ENCODE measurements at regions of chr22 and their contacts with region 1.

Region 1: DNA sequence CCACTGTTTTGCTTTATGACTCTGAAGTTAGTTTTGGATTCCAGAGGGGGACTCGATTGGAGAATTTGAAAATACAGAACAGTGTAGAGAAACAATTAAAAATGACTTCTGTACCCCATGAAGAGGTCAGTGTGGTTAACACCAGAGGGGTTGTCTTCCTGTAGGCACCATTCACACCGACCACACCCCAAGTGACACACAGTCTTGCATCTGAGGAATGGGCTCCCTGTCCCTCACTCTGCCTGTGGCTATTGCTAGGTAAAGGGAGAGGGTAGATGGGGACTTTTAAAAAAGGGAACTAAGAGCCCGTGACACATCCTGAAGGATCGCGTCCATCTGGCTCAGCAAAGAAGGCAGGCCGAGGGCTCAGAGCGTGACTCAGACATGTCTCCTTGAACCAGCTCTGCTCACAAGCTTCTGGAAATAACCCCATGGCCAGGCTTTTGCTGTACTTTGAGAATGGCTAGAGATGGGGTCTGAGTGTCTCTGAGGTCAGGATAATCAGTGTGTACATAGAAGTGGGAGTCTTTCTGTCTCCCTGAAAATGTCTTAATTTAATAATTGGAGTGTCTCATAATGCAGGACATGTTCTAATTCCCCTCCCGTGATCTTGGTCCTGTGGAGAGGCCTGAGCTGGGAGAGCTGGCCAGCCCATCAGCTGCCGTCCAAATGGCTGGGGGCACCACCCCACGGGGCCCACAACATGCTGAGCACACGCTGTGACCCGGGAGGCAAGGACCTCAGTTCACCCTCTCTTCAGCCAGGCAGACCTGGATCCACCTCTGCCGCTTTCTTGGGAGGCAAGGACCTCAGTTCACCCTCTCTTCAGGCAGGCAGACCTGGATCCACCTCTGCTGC is 39.3 kb downstream of the SGSM1 start:
- DNase-seq: no peak
- H3K4me3 ChIP-seq: no peak overlapping the region
- H3K27ac ChIP-seq: no peak overlapping the region
- H3K4me1 ChIP-seq: no peaks in the 10 kb centered on the region
- H3K27me3 ChIP-seq: no peaks in the 10 kb centered on the region
- CTCF ChIP-seq: no peak
- EP300 ChIP-seq: no peak
- POLR2A ChIP-seq: no peak
- RAD21 ChIP-seq: no peak

Region 2: GRCh38 chr22:24768537-24769374 is 76.5 kb before region 1 on chr22:
- CTCF ChIA-PET with region 1: interaction called, 39 read pairs
- POLR2A ChIA-PET with region 1: no interaction called
- DNase-seq: peak in 1 of 2 experiments; percentile 76
- H3K4me3 ChIP-seq: no peak overlapping the region
- H3K27ac ChIP-seq: no peak overlapping the region
- H3K4me1 ChIP-seq: peaks cover 0 to 3% (median 1%) of the 10 kb centered on the region in 4 experiments; a peak in 2 of 7 replicates
- H3K27me3 ChIP-seq: no peaks in the 10 kb centered on the region
- CTCF ChIP-seq: peak; percentile 47 to 82 (median 65)
- EP300 ChIP-seq: no peak
- POLR2A ChIP-seq: no peak
- RAD21 ChIP-seq: peak; percentile 82 to 85

Region 3: GRCh38 chr22:24803011-24803542 is 42.2 kb before region 1 on chr22:
- CTCF ChIA-PET with region 1: interaction called, 18 read pairs
- POLR2A ChIA-PET with region 1: no interaction called
- DNase-seq: peak; percentile 73 to 97
- H3K4me3 ChIP-seq: no peak overlapping the region
- H3K27ac ChIP-seq: no peak overlapping the region
- H3K4me1 ChIP-seq: peaks cover 0 to 6% (median 3%) of the 10 kb centered on the region in 4 experiments; a peak in 6 of 7 replicates
- H3K27me3 ChIP-seq: no peaks in the 10 kb centered on the region
- CTCF ChIP-seq: peak; percentile 90 to 96 (median 95)
- EP300 ChIP-seq: no peak
- POLR2A ChIP-seq: no peak
- RAD21 ChIP-seq: peak; percentile 51 to 67

Region 4: GRCh38 chr22:24827296-24827695 is 18.0 kb before region 1 on chr22:
- CTCF ChIA-PET with region 1: interaction called, 21 read pairs
- POLR2A ChIA-PET with region 1: interaction called, 3 read pairs
- DNase-seq: no peak
- H3K4me3 ChIP-seq: no peak overlapping the region
- H3K27ac ChIP-seq: no peak overlapping the region
- H3K4me1 ChIP-seq: peaks cover 4 to 12% (median 11%) of the 10 kb centered on the region in 4 experiments
- H3K27me3 ChIP-seq: no peaks in the 10 kb centered on the region
- CTCF ChIP-seq: no peak
- EP300 ChIP-seq: no peak
- POLR2A ChIP-seq: no peak
- RAD21 ChIP-seq: no peak

Region 5: GRCh38 chr22:24834845-24835570 is 10.3 kb before region 1 on chr22:
- CTCF ChIA-PET with region 1: interaction called, 22 read pairs
- POLR2A ChIA-PET with region 1: interaction called, 3 read pairs
- DNase-seq: peak in 1 of 2 experiments; percentile 57
- H3K4me3 ChIP-seq: no peak overlapping the region
- H3K27ac ChIP-seq: no peak overlapping the region; the same call in 1 of the 2 replicates
- H3K4me1 ChIP-seq: peaks cover 9 to 20% (median 15%) of the 10 kb centered on the region in 4 experiments
- H3K27me3 ChIP-seq: no peaks in the 10 kb centered on the region
- CTCF ChIP-seq: peak; percentile 60 to 76 (median 63)
- EP300 ChIP-seq: no peak
- POLR2A ChIP-seq: no peak
- RAD21 ChIP-seq: peak; percentile 36 to 53

Region 6: GRCh38 chr22:24867323-24868022 is 22.2 kb after region 1 on chr22:
- CTCF ChIA-PET with region 1: interaction called, 14 read pairs
- POLR2A ChIA-PET with region 1: no interaction called
- DNase-seq: no peak
- H3K4me3 ChIP-seq: no peak overlapping the region
- H3K27ac ChIP-seq: no peak overlapping the region
- H3K4me1 ChIP-seq: no peaks in the 10 kb centered on the region
- H3K27me3 ChIP-seq: no peaks in the 10 kb centered on the region; a peak in 1 of 7 replicates
- CTCF ChIP-seq: no peak
- EP300 ChIP-seq: no peak
- POLR2A ChIP-seq: no peak
- RAD21 ChIP-seq: no peak

Region 7: GRCh38 chr22:24875862-24876506 is 30.7 kb after region 1 on chr22:
- CTCF ChIA-PET with region 1: interaction called, 22 read pairs
- POLR2A ChIA-PET with region 1: no interaction called
- DNase-seq: peak; percentile 38 to 80
- H3K4me3 ChIP-seq: no peak overlapping the region
- H3K27ac ChIP-seq: no peak overlapping the region
- H3K4me1 ChIP-seq: no peaks in the 10 kb centered on the region
- H3K27me3 ChIP-seq: no peaks in the 10 kb centered on the region
- CTCF ChIP-seq: no peak
- EP300 ChIP-seq: no peak
- POLR2A ChIP-seq: no peak
- RAD21 ChIP-seq: no peak

Region 8: GRCh38 chr22:24894220-24894975 is 49.1 kb after region 1 on chr22:
- CTCF ChIA-PET with region 1: no interaction called
- POLR2A ChIA-PET with region 1: no interaction called
- DNase-seq: no peak
- H3K4me3 ChIP-seq: no peak overlapping the region
- H3K27ac ChIP-seq: 0 out of 2 replicates have a peak overlapping the region, but pooled peaks have one; percentile 10
- H3K4me1 ChIP-seq: peaks cover 0 to 6% (median 2%) of the 10 kb centered on the region in 4 experiments; a peak in 3 of 7 replicates
- H3K27me3 ChIP-seq: no peaks in the 10 kb centered on the region
- CTCF ChIP-seq: no peak
- EP300 ChIP-seq: no peak
- POLR2A ChIP-seq: no peak
- RAD21 ChIP-seq: no peak

Measured in H1 (cell line).